Left cardiac atrium (tissue), 4 donors: ENCODE measurements at regions of chr6 and their contacts with region 1.

Region 1: DNA sequence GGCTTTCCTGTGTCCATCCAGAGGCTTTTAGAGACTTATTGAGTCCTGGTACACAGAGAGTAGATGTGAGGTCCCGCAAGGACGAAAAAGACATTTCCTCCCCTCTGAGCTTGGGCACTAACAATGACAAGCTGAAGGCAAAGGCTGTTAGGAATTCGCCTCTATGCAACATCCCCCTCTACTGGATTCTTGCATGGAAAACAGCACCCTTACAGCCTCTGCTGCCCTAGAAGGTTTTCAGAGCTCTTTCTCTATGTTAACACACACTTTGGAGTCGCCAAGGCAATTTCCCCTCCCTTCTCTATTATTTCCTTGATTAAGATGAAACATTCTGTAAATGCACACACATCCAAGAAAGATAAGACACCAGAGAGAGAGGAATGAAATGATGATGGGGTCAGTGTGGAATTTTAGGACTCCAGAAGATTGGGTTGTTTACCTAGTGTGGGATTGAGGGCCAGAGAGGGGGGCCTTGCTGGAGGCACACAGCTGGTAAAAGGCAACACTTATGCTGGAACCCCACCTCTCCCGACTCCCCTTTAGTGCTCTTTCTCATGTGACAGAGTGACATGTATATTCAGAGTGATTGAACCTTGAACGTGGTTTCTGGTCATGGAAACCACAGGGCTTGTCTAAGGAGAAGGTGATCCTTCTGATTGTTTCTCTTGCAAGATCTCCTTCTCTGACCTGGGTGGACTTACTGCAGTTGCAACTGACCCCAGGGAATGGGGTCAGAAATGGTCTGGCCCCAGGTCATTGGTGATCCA is 300.7 kb downstream of the CLIC5 start:
- DNase-seq: no peak
- ATAC-seq: peak; percentile 93

Region 2: DNA sequence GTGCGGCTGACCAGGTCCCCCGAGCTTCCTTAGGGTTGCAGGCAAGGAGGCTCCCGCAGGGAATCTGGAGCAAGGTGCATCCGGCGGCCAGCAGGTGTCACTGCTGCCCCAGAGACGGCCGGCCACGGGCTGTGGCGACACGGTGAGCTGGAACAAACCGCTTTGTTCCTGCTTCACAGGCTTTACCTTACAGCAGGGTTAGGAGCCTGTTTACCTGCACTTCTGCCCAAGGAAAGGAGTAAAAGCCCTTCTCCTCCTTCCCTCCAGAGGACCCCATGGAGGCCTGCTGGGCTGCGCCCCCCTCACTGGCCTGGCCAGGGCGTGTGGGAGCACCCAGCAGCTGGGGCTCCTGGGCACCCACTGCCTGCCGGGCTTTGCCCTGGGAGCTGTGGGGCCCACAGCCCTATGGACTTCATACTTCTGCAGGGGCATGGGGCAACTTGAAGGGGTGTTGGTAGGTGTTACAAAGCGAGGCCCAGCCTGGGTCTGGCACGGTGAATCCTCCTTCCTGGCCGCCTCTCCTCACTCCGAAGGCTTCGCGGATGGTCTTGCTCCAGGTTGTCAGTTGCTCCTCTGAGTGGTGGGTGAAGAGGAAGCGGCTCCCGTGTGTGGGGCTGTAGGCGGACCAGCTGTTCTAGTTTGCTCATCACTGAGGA is 1239.0 kb before region 1 on chr6:
- intact Hi-C with region 1: loop called (anchors 10 kb)
- DNase-seq: peak; percentile 79
- ATAC-seq: peak; percentile 83 to 88

Region 3: DNA sequence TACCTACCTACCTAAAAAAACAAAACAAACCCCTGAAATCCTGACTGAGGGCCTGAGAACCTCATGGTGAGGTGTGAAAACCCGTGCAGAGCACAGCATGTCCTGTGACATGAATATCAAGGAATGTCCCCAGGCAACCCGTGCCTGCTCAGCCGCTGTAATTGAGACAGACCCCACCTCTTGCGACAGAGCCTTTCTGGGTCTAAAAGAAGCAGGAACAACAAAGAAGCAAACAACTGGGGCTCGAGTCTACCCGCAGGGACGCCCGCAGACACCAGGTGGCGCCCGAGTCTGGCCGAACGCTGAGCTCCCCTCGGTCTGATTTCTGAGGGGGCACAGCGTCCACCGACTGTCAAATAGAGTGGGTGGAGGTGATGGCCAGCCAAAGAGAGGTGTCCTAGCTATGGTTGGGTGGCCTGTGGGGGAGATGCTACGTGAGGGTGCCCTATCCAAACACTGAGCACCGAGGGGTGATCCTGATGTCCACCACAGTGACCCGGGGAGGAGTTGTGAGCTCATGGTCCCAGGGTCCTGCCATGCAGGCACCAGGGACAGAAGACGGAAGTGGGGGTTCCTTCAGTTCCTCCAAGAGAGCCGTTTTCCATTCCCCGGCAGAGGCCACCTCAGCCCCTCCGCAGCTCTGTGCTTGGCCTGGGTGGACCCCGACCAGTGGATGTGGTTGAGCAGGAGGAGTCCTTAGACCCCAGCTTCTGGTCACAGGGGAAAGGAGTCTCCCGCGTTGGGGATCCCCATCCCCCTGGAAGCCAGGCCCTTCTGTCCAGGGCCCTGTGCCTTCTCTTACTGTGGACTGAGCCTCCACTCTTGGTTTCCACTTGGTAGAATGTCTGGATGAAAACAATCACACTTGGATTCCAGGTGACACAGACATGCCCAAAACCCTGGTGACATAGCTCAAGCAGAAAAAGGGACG is 1059.2 kb before region 1 on chr6:
- intact Hi-C with region 1: loop called (anchors 2 to 5 kb)
- DNase-seq: peak; percentile 77
- ATAC-seq: peak; percentile 76 to 82

Region 4: GRCh38 chr6:45419571-45420082 is 295.3 kb before region 1 on chr6:
- intact Hi-C with region 1: loop called in 1 of 2 experiments (anchors 10 kb)
- DNase-seq: peak; percentile 52
- ATAC-seq: peak; percentile 21 to 25

Region 5: GRCh38 chr6:45640081-45640491 is 74.8 kb before region 1 on chr6:
- intact Hi-C with region 1: no loop called
- DNase-seq: no peak
- ATAC-seq: no peak